Panc1 (cell line): ENCODE measurements at regions of chr2 and their contacts with region 1.

Region 1: GRCh38 chr2:230824406-230824978 is 40.2 kb upstream of the ITM2C start:
- DNase-seq: peak; percentile 60
- ATAC-seq: peak; percentile 90
- H3K4me3 ChIP-seq: peak overlapping the region in 1 of 2 experiments; percentile 30; a peak in 2 of 4 replicates
- H3K27ac ChIP-seq: no peak overlapping the region
- H3K4me1 ChIP-seq: no peaks in the 10 kb centered on the region
- H3K27me3 ChIP-seq: no peaks in the 10 kb centered on the region
- CTCF ChIP-seq: peak; percentile 82

Region 2: GRCh38 chr2:230902180-230902899 is 77.8 kb after region 1 on chr2:
- CTCF ChIA-PET with region 1: interaction called, 4 read pairs
- POLR2A ChIA-PET with region 1: no interaction called
- in situ Hi-C with region 1: no loop called
- intact Hi-C with region 1: loop called (anchors 10 kb)
- DNase-seq: peak; percentile 42
- ATAC-seq: peak; percentile 87
- H3K4me3 ChIP-seq: no peak overlapping the region
- H3K27ac ChIP-seq: no peak overlapping the region
- H3K4me1 ChIP-seq: no peaks in the 10 kb centered on the region
- H3K27me3 ChIP-seq: no peaks in the 10 kb centered on the region
- CTCF ChIP-seq: peak; percentile 93

Region 3: GRCh38 chr2:230987137-230988020 is 162.9 kb after region 1 on chr2:
- CTCF ChIA-PET with region 1: interaction called, 29 read pairs
- POLR2A ChIA-PET with region 1: no interaction called
- in situ Hi-C with region 1: no loop called
- intact Hi-C with region 1: loop called (anchors 1 kb)
- DNase-seq: peak; percentile 20
- ATAC-seq: peak; percentile 94
- H3K4me3 ChIP-seq: peak overlapping the region; percentile 41 to 61
- H3K27ac ChIP-seq: peak overlapping the region; percentile 66
- H3K4me1 ChIP-seq: peaks cover 4% of the 10 kb centered on the region
- H3K27me3 ChIP-seq: no peaks in the 10 kb centered on the region
- CTCF ChIP-seq: peak; percentile 96

Region 4: DNA sequence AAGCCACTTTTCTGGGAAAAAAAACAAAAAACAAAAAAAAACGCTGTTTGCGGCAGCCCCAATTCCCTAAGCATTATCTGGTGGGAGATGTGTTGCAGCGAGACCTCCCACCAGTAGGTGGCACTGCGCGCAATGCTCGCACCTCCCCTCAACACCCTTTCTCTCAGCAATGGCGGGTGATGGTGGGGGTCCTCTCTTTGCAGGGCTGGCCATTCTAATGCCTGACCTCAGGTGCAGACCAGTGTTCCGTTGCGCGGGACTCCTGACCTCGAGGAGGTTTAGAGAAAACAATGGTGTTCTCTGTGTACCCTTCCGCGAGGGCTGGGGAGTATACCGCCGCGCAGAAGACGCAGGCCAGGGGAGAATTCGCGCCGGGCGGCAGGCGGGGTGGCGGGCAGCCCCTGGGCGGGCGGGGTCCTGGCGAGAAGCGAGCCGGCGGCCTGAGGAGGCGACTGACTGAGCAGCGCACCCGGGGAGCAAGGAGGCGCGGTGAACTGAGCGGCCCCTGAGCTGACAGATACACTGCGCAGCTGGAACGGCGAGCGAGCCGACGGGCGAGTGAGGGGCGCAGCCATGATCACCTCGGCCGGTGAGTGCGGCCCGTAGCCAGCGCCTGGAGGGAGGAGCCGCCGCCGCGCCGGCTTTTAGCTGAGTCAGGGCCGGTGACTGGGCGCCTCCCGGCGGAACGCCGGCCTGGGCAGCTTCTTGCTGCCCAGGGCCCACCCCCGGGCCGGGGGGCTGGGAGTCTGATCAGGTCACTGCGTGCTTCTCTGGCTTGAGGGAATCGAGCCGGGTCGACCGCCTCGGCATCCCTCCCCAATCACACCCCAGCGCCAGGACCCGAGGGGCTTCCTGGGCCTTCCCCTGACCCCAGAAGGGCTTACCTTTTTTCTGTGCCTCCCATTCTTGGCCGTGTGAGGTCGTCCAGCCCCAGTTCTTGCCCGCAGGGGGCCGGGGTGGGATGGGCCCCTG is 232.2 kb after region 1 on chr2 and contains the start of gene PSMD1:
- CTCF ChIA-PET with region 1: interaction called, 4 read pairs
- POLR2A ChIA-PET with region 1: no interaction called
- in situ Hi-C with region 1: no loop called
- intact Hi-C with region 1: loop called (anchors 10 kb)
- DNase-seq: peak; percentile 82
- ATAC-seq: peak; percentile 88
- H3K4me3 ChIP-seq: peak within 1 kb of the TSS; percentile 70 to 99
- H3K27ac ChIP-seq: peak within 1 kb of the TSS; percentile 81
- H3K4me1 ChIP-seq: peaks cover 38% of the 10 kb centered on the region
- H3K27me3 ChIP-seq: no peaks in the 10 kb centered on the region
- CTCF ChIP-seq: peak; percentile 96
- total RNA-seq, gene PSMD1: 146 TPM